Activated naive CD4-positive, alpha-beta T cell treated with anti-CD3 and anti-CD28 coated beads for 36 hours (primary cell): ENCODE measurements at regions of chr1 and their contacts with region 1.

Region 1: DNA sequence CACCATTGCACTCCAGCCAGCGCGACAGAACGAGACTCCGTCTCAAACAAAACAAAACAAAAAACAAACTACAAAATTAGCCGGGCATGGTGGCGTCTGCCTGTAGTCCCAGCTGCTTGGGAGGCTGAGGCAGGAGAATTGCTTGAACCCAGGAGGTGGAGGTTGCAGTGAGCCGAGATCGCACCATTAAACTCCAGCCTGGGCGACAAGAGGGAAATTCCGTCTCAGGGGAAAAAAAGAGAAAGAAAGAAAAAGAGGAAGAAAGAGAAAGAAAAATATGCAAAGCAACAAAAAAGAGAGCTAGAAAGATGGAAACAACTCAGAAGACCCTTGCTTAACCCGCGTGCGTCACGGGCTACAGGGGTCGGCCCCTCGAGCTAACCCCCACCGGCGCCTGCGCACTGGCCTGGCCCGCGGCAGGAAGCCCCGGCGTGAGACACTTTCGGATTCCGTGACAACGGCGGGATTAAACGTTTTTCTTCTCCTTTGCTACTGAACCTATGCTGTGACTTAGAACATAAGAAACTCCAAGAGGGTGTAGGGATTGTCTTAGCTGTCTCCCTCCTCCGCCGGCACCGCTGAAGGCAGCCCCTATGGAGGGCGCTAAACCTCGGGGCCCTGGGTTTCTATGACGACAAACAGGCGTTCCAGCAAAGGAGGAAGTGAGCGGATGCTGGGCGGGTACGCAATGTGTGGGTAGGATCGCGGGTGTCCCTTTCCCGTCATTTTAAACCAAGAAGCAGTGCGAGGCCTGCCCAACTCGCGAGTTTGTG is at the start of gene AXDND1:
- DNase-seq: peak; percentile 94
- H3K4me3 Mint-ChIP-seq: peak within 1 kb of the TSS; percentile 93
- H3K27ac Mint-ChIP-seq: peak within 1 kb of the TSS; percentile 100
- H3K4me1 Mint-ChIP-seq: peaks cover 21% of the 10 kb centered on the region
- H3K27me3 Mint-ChIP-seq: no peaks in the 10 kb centered on the region
- total RNA-seq, gene AXDND1: 0.57 to 0.67 TPM

Region 2: GRCh38 chr1:178725603-178726517 is 639.6 kb before region 1 on chr1:
- CTCF ChIA-PET with region 1: interaction called, 3 read pairs
- intact Hi-C with region 1: loop called (anchors 2 kb)
- DNase-seq: peak; percentile 80
- H3K4me3 Mint-ChIP-seq: peak overlapping the region; percentile 73
- H3K27ac Mint-ChIP-seq: no peak overlapping the region
- H3K4me1 Mint-ChIP-seq: peaks cover 24% of the 10 kb centered on the region
- H3K27me3 Mint-ChIP-seq: no peaks in the 10 kb centered on the region

Region 3: DNA sequence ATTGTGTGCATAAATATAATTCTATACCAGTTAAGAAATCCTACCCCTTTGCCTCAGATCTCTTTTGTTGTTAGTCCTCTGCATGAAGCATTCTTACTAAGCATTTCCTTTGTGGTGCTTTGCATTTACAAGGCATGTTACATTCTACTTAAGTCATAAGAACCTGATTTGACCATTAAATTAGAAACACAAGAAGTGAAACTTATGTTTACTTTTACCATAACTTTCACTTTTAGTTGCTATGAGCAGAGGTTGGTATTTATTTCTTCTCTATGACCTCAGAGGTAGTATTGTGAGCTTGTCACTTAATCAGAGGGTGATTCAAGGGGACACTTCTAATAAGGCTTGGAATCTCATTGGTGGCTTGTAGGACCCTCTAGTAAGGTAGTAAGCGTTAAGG is 330.8 kb before region 1 on chr1:
- CTCF ChIA-PET with region 1: interaction called, 3 read pairs
- intact Hi-C with region 1: loop called (anchors 2 kb)
- DNase-seq: no peak
- H3K4me3 Mint-ChIP-seq: no peak overlapping the region
- H3K27ac Mint-ChIP-seq: peak overlapping the region; percentile 77
- H3K4me1 Mint-ChIP-seq: peaks cover 85% of the 10 kb centered on the region
- H3K27me3 Mint-ChIP-seq: no peaks in the 10 kb centered on the region

Region 4: DNA sequence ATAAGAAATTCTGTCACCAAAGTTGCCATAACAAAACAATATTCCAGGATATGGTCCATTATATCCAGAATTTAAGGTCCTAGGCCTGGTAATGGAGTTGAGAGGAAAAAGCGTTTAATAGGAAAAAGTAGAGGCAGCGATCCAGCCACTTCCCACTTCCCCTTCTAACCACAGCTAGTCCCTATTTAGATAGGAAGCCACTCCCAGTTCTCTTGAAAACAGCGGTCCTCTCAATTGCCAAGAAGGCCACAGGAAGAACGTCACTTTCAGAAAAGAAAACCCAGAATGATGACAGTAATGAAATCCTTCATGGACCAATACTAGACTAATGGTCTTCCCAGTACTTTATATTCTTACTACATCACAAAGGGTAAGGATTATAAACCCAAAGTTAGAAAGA is 174.6 kb before region 1 on chr1:
- CTCF ChIA-PET with region 1: interaction called, 5 read pairs
- intact Hi-C with region 1: loop called (anchors 5 kb)
- DNase-seq: no peak
- H3K4me3 Mint-ChIP-seq: no peak overlapping the region
- H3K27ac Mint-ChIP-seq: no peak overlapping the region
- H3K4me1 Mint-ChIP-seq: peaks cover 20% of the 10 kb centered on the region
- H3K27me3 Mint-ChIP-seq: no peaks in the 10 kb centered on the region

Region 5: DNA sequence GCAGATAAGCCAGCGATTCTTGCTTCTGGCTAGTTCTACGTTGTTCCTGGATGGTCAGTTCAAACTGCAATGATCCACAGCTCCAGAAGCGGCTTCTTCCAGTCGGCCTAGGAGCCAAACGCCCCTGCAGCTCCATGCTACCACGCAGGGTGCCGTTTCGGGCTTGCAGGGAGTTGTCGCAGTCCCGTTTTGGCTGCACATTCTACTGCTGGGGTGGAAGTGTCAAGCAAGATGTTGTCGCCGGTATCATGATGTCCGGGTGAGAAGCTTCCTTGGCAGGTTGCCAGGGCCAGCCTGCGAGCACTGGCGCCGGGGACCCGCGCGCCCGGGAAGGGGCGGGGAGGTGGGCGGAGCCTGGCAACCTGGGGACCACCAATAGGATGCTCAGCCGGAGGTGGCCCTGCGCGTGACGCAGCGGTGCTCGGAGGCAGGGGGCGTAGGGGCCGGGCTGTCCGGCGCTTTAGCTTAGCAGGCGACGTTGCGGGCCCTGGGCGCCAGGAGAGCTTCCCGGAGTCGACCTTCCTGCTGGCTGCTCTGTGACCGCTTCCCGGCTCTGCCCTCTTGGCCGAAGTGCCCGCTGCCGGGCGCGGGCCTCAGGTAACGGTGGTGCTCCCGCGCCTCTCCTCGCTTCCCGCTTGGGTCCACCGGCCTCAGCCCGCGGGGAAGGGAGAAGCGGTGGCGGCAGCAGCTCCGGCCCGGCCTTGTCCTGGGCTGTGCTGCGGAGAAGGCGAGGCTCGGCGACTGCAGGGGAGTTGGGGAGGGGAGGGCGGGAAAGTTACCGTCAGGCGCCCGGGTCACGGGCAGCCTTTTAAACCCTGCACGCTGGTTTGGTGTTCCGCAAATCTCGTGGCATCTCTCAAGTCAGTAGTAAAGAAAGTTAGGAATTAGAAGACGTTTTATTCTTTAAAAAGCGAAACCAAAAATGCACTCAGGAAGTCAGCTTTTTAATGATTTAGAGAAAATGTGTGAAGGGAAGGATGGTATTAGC is 71.9 kb before region 1 on chr1 and contains the start of gene SOAT1:
- CTCF ChIA-PET with region 1: interaction called, 11 read pairs
- intact Hi-C with region 1: loop called (anchors 1 kb)
- DNase-seq: peak; percentile 93
- H3K4me3 Mint-ChIP-seq: peak within 1 kb of the TSS; percentile 93
- H3K27ac Mint-ChIP-seq: peak within 1 kb of the TSS; percentile 89
- H3K4me1 Mint-ChIP-seq: peaks cover 44% of the 10 kb centered on the region
- H3K27me3 Mint-ChIP-seq: no peaks in the 10 kb centered on the region
- total RNA-seq, gene SOAT1: 38.8 to 42.4 TPM